ENCODE measurements at regions of chr1 and their contacts with region 1.

Region 1: DNA sequence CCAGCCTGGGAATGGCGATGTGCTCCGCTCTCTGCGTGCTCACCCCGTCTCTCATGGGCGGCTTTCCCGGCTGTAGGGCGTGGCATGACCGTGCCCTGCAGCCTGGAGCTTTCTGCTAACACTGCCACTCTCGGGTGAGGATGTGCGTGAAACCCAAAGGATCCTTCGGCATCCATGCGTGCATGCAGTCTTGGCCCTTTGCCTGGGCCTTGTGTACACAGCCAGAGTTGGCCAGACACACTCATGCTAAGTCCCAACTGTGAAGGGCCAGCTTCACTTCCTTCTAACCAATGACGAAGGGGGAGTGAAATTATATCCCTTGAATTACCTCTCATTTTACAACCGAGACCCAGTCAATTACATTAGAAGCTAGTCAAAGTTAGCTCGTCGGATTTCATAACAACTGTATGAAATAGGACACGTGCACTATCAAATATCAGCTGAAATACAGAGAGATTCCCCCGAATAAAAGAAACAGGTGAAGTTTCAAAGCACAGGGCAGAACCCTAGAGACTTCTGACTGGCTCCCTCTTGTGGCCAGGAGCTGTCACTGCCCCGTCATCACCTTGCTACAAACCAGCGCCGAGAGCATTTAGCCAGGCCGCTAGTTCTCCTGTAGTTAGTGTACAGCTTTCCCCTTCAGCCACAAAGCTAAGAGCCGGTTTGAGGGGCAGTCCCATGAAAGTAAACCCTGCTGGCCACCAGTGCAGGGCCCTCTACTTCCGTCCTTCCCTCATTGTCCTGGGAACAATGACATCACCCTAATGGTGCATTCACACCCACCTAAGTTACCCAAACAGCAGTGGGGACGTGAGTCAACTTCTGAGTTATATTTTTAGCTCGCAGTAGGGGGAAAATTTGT is 63.4 kb upstream of the COA6 start:
- DNase-seq: peak; percentile 8 to 89 (median 61)
- ATAC-seq: peak; percentile 81 to 91 (median 88)
- H3K4me3 ChIP-seq: no peak overlapping the region
- H3K4me3 Mint-ChIP-seq: peak overlapping the region in 1 of 3 donors; percentile 7
- H3K27ac ChIP-seq: no peak overlapping the region
- H3K27ac Mint-ChIP-seq: peak overlapping the region in 1 of 2 donors; percentile 81
- H3K4me1 ChIP-seq: peaks cover 3 to 47% of the 10 kb centered on the region in 2 experiments
- H3K4me1 Mint-ChIP-seq: peaks cover 0 to 51% (median 13%) of the 10 kb centered on the region in 3 donors
- H3K27me3 ChIP-seq: peaks cover 2 to 8% of the 10 kb centered on the region in 2 experiments
- H3K27me3 Mint-ChIP-seq: peaks cover 0 to 3% of the 10 kb centered on the region in 2 donors

Region 2: DNA sequence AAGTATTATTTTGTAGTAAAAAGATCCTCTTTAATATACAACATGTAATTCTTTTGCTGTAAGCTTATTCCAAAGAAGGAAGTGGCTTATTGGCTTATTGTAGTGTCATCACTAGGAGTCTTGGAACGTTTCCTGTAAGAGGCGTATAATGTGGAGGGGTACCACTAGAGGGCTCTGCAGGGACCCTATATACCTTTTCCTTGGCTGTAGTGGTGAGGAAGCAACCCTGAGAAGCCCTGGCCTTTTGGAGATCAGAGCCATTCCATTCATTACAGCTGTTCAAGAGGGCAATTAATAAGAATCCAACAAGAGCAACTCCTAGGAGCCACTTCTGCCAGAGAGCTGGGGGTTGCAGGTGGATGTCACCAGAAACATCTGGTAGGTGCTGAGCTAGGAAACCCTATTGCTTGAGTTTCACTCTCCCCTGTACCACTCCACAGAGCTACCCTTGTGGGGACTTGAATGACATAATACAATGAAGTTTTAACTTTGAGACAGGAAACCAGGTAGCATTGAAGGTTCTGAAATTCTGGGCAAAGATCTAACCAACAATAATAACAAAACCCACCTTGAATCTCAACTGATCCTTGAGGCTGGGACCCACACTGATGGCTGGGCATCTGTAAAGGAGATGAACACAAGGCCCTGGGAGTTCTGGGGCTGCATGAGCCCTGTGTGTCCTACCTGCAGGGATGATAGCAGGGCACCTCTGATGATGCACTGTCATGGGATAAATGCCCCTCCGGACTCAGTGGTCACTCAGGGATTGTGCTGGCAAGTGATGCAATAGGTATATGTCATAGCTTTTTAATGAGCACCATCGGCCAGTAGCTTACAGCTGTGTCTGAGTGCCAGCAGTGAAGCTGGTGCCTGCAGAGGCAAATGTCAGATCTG is 96.8 kb before region 1 on chr1:
- CTCF ChIA-PET with region 1: interaction called in 1 of 2 experiments, 10 read pairs
- POLR2A ChIA-PET with region 1: no interaction called
- DNase-seq: peak in 8 of 35 experiments; percentile 12 to 68 (median 24)
- ATAC-seq: peak in 3 of 4 experiments; percentile 41 to 53 (median 42)
- H3K4me3 ChIP-seq: no peak overlapping the region
- H3K4me3 Mint-ChIP-seq: peak overlapping the region in 2 of 3 donors; percentile 73 to 82
- H3K27ac ChIP-seq: no peak overlapping the region
- H3K27ac Mint-ChIP-seq: peak overlapping the region in 1 of 2 donors; percentile 83
- H3K4me1 ChIP-seq: peaks cover 0 to 29% of the 10 kb centered on the region in 2 experiments
- H3K4me1 Mint-ChIP-seq: peaks cover 5 to 32% (median 10%) of the 10 kb centered on the region in 3 donors
- H3K27me3 ChIP-seq: peaks cover 0 to 29% of the 10 kb centered on the region in 2 experiments
- H3K27me3 Mint-ChIP-seq: peaks cover 6 to 32% of the 10 kb centered on the region in 2 donors

Region 3: GRCh38 chr1:234326497-234327366 is 16.9 kb after region 1 on chr1:
- CTCF ChIA-PET with region 1: interaction called, 4 to 21 read pairs
- POLR2A ChIA-PET with region 1: no interaction called
- DNase-seq: peak; percentile 21 to 85 (median 58)
- ATAC-seq: peak; percentile 88 to 93 (median 92)
- H3K4me3 ChIP-seq: peak overlapping the region; percentile 55 to 61
- H3K4me3 Mint-ChIP-seq: peak overlapping the region; percentile 81 to 90 (median 90)
- H3K27ac ChIP-seq: peak overlapping the region; percentile 40
- H3K27ac Mint-ChIP-seq: peak overlapping the region; percentile 80 to 98
- H3K4me1 ChIP-seq: peaks cover 0 to 22% of the 10 kb centered on the region in 2 experiments
- H3K4me1 Mint-ChIP-seq: peaks cover 22 to 34% (median 28%) of the 10 kb centered on the region in 3 donors
- H3K27me3 ChIP-seq: peaks cover 0 to 19% of the 10 kb centered on the region in 2 experiments
- H3K27me3 Mint-ChIP-seq: peaks cover 3 to 17% of the 10 kb centered on the region in 2 donors

Region 4: GRCh38 chr1:234342774-234343173 is 32.9 kb after region 1 on chr1:
- CTCF ChIA-PET with region 1: no interaction called
- POLR2A ChIA-PET with region 1: no interaction called
- DNase-seq: no peak
- ATAC-seq: no peak
- H3K4me3 ChIP-seq: no peak overlapping the region
- H3K4me3 Mint-ChIP-seq: no peak overlapping the region
- H3K27ac ChIP-seq: no peak overlapping the region
- H3K27ac Mint-ChIP-seq: no peak overlapping the region
- H3K4me1 ChIP-seq: no peaks in the 10 kb centered on the region
- H3K4me1 Mint-ChIP-seq: no peaks in the 10 kb centered on the region
- H3K27me3 ChIP-seq: no peaks in the 10 kb centered on the region
- H3K27me3 Mint-ChIP-seq: peaks cover 0 to 4% of the 10 kb centered on the region in 2 donors

Region 5: GRCh38 chr1:234433563-234434285 is 123.9 kb after region 1 on chr1:
- CTCF ChIA-PET with region 1: no interaction called
- POLR2A ChIA-PET with region 1: no interaction called
- DNase-seq: no peak
- ATAC-seq: no peak
- H3K4me3 ChIP-seq: no peak overlapping the region
- H3K4me3 Mint-ChIP-seq: no peak overlapping the region
- H3K27ac ChIP-seq: no peak overlapping the region
- H3K27ac Mint-ChIP-seq: no peak overlapping the region
- H3K4me1 ChIP-seq: no peaks in the 10 kb centered on the region
- H3K4me1 Mint-ChIP-seq: no peaks in the 10 kb centered on the region
- H3K27me3 ChIP-seq: no peaks in the 10 kb centered on the region
- H3K27me3 Mint-ChIP-seq: no peaks in the 10 kb centered on the region

Measured in T-cell (primary cell).